IMR-90 (cell line): ENCODE measurements at regions of chr9 and their contacts with region 1.

Region 1: GRCh38 chr9:69678882-69679538 is 6.8 kb upstream of the APBA1 start:
- DNase-seq: no peak
- ATAC-seq: peak; percentile 56
- H3K4me3 ChIP-seq: no peak overlapping the region
- H3K27ac ChIP-seq: no peak overlapping the region
- H3K4me1 ChIP-seq: peaks cover 2% of the 10 kb centered on the region; the same call in 1 of the 2 replicates
- H3K27me3 ChIP-seq: no peaks in the 10 kb centered on the region
- CTCF ChIP-seq: no peak
- POLR2A ChIP-seq: no peak
- RAD21 ChIP-seq: no peak

Region 2: DNA sequence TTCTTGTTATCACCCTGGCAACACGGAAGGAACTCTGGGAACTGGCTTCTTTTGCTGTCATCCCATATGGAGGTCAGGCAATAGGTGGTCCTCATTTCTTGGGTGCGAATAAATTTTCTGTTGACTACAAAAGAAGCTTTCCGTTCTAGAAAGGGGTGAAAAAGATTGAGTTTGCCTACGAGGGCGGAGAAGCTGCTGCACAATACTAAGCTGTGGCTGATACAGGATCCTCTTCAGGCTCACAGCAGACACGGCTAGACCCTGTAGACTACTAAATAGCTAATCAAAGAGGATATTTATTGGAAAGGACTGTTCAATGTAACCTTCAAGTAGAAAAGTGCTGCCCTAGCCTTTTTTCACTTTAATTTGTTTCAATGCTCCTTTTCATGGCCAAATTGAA is 446.9 kb before region 1 on chr9:
- CTCF ChIA-PET with region 1: no interaction called
- POLR2A ChIA-PET with region 1: no interaction called
- dilution Hi-C with region 1: no loop called
- in situ Hi-C with region 1: no loop called
- intact Hi-C with region 1: no loop called
- DNase-seq: no peak
- ATAC-seq: no peak
- H3K4me3 ChIP-seq: no peak overlapping the region
- H3K27ac ChIP-seq: no peak overlapping the region
- H3K4me1 ChIP-seq: no peaks in the 10 kb centered on the region
- H3K27me3 ChIP-seq: no peaks in the 10 kb centered on the region
- CTCF ChIP-seq: no peak
- POLR2A ChIP-seq: no peak
- RAD21 ChIP-seq: no peak

Region 3: DNA sequence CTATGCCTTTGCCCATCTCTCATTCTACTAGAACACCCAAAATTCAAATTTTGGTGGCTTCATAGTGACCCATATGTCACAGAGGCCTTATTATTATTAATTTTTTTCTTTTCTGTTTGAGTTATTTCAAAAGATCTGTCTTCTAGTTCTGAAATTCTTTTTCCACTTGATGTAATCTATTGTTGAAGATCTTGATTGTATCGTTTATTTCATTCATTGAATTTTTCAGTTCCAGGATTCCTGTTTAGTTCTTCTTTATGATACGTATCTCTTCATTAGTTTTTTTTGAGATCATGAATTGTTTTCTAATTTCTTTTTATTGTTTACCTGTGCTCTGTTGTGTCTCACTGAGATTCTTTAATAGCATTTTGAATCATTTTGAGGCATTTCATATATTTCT is 17.8 kb after region 1 on chr9:
- CTCF ChIA-PET with region 1: no interaction called
- POLR2A ChIA-PET with region 1: no interaction called
- dilution Hi-C with region 1: no loop called
- in situ Hi-C with region 1: no loop called
- intact Hi-C with region 1: loop called (anchors 2 kb)
- DNase-seq: no peak
- ATAC-seq: no peak
- H3K4me3 ChIP-seq: no peak overlapping the region
- H3K27ac ChIP-seq: no peak overlapping the region
- H3K4me1 ChIP-seq: no peaks in the 10 kb centered on the region
- H3K27me3 ChIP-seq: no peaks in the 10 kb centered on the region
- CTCF ChIP-seq: no peak
- POLR2A ChIP-seq: no peak
- RAD21 ChIP-seq: no peak

Region 4: DNA sequence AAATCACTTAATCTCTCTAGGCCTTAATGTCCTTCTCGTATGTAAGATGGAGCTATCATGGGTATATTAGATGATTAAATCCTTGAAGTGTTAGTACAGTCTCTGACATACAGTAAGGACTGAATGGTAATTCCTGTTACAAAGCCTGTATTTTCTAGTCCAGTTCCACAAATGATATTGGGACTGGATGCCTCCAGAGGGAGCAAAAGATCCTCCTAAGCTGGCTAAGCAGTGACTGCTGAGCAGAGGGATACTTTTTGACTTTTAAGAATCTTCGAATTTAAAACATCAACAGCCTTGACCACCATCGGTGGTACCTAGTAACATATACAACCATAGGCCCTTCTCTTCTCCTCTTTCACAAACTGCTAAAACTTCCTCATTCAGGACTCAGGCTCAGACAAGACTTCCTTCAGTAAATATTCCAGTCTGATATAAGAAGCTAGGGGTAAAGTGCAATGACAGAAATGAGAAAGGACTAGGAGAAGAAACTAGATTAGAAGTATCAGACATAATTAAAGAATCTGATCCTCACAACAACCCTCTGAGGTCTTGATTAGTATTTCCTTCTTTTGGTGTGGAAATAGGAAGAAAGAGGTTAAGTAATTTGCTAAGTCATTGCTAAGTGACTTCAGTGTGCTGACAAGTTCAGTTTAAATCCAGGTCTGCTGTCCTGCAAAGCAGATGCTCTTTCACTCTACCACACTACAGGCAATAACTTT is 66.9 kb after region 1 on chr9:
- CTCF ChIA-PET with region 1: no interaction called
- POLR2A ChIA-PET with region 1: no interaction called
- dilution Hi-C with region 1: no loop called
- in situ Hi-C with region 1: no loop called
- intact Hi-C with region 1: no loop called
- DNase-seq: peak; percentile 47
- ATAC-seq: peak; percentile 57
- H3K4me3 ChIP-seq: no peak overlapping the region
- H3K27ac ChIP-seq: no peak overlapping the region
- H3K4me1 ChIP-seq: peaks cover 22% of the 10 kb centered on the region
- H3K27me3 ChIP-seq: no peaks in the 10 kb centered on the region
- CTCF ChIP-seq: peak; percentile 49
- POLR2A ChIP-seq: no peak
- RAD21 ChIP-seq: peak; percentile 60

Region 5: GRCh38 chr9:70136632-70137031 is 457.6 kb after region 1 on chr9:
- CTCF ChIA-PET with region 1: interaction called, 10 read pairs
- POLR2A ChIA-PET with region 1: no interaction called
- dilution Hi-C with region 1: no loop called
- in situ Hi-C with region 1: no loop called
- intact Hi-C with region 1: no loop called
- DNase-seq: peak; percentile 69
- ATAC-seq: peak; percentile 52
- H3K4me3 ChIP-seq: no peak overlapping the region
- H3K27ac ChIP-seq: no peak overlapping the region
- H3K4me1 ChIP-seq: peaks cover 6% of the 10 kb centered on the region
- H3K27me3 ChIP-seq: no peaks in the 10 kb centered on the region
- CTCF ChIP-seq: no peak
- POLR2A ChIP-seq: no peak
- RAD21 ChIP-seq: no peak